CD4-positive, alpha-beta T cell (primary cell): ENCODE measurements at regions of chr1 and their contacts with region 1.

Region 1: DNA sequence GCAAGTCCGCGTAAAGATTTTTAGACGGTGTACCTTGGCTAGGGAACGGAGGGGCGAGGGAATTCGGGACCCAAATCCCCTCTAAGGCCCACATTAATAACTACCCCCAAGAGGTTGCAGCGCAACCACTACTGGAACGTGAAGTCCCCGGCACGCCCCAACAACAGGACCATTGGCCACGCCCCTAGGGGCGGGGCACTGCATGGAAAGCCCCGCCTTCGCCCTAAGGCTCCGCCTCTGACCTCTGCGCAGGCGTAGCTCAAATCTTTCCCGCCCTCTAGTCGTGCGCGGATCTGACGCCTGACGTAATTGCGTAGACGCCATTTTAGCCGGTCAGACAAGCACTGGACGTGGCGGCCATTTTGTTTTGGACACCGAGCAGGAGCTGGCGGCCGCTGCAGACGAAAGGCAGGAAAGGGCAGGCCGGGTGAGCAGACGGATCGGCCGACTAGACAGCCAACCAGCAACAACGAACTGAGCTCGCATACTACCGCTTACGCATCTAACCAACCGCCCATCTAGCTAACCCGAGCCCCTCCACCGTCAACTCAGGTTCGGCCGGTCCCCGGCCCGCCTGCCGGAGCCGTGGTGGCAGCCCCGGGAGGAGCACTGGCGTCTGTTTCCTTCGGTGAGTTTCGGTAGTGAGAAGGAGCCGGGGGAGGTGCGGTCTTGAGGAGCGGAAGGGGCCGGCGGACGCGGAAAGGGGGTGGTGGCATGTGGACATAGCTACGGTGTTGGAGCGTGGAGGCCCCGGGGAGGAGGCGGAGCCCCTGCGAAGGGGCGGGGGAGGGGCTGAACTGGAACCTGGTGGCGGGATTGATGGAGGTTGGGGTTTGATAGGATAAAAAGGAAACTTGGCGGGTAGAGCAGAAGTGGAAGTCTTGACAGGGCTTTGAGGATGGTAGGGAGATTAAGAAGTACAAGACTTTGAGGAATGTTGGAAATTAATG is at the start of gene CHTOP:
- DNase-seq: peak; percentile 90 to 98 (median 95)
- ATAC-seq: peak; percentile 87
- H3K4me3 ChIP-seq: peak within 1 kb of the TSS; percentile 83
- H3K4me3 Mint-ChIP-seq: peak within 1 kb of the TSS; percentile 100
- H3K27ac ChIP-seq: peak within 1 kb of the TSS; percentile 98 to 100
- H3K27ac Mint-ChIP-seq: peak within 1 kb of the TSS; percentile 100
- H3K4me1 ChIP-seq: peaks cover 33% of the 10 kb centered on the region
- H3K4me1 Mint-ChIP-seq: peaks cover 47% of the 10 kb centered on the region
- H3K27me3 ChIP-seq: no peaks in the 10 kb centered on the region
- H3K27me3 Mint-ChIP-seq: no peaks in the 10 kb centered on the region
- CTCF ChIP-seq: no peak
- total RNA-seq, gene CHTOP: 97.1 to 102 TPM

Region 2: DNA sequence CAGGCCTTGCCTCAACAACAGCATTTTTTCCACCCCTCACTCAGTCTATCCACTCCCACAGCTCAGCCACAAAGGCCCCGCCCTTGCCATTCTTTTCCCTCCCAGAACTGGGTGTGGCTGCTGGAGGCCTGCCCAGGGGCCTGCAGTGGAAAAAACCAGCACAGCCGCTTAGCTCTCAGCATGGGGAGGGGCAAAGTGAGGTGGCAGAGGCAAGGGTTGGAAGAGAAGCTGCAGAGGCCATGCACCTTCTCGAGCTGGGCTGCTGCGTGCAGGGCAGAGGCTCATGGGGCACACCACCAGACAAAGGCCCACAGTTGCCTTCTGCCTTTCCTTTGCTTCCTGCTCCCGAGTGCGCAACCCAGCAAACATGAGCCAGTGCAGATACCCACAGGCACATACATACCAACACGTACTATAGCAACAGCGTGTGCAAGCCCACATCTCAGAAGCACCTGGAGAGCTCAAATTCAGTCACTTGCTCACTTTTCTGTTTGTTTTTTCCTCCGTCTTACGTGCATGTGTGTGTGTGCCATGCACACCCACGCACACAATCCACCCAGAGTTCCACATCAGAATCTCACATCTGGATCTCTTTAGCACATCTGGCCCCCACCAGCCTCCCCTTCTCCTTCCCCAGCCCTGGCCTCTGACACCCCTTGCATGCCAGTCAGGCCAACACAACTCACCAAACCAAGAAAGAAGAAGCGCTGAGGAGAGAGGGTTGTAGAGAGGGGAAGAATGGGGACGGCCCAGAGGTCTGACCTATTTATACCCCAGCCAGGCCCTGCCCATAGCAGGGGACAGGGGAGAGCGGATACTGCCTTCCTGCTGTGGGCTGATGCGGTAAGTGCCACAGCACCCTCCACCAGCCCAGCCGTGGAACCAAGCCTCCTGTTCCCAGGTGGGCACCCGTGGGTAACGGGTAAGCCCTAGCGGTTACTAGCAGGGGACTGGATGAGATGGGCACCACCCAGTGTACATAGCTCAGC is 88.6 kb before region 1 on chr1 and contains the start of gene S100A4:
- CTCF ChIA-PET with region 1: no interaction called
- POLR2A ChIA-PET with region 1: interaction called, 40 read pairs
- intact Hi-C with region 1: loop called in 1 of 2 experiments (anchors 5 kb)
- DNase-seq: peak; percentile 65 to 95 (median 88)
- ATAC-seq: peak; percentile 81
- H3K4me3 ChIP-seq: peak within 1 kb of the TSS; percentile 82
- H3K4me3 Mint-ChIP-seq: peak within 1 kb of the TSS; percentile 88
- H3K27ac ChIP-seq: peak within 1 kb of the TSS; percentile 83 to 85
- H3K27ac Mint-ChIP-seq: peak within 1 kb of the TSS; percentile 98
- H3K4me1 ChIP-seq: peaks cover 83% of the 10 kb centered on the region
- H3K4me1 Mint-ChIP-seq: peaks cover 72% of the 10 kb centered on the region
- H3K27me3 ChIP-seq: no peaks in the 10 kb centered on the region
- H3K27me3 Mint-ChIP-seq: no peaks in the 10 kb centered on the region
- CTCF ChIP-seq: no peak
- total RNA-seq, gene S100A4: 297 to 299 TPM

Region 3: DNA sequence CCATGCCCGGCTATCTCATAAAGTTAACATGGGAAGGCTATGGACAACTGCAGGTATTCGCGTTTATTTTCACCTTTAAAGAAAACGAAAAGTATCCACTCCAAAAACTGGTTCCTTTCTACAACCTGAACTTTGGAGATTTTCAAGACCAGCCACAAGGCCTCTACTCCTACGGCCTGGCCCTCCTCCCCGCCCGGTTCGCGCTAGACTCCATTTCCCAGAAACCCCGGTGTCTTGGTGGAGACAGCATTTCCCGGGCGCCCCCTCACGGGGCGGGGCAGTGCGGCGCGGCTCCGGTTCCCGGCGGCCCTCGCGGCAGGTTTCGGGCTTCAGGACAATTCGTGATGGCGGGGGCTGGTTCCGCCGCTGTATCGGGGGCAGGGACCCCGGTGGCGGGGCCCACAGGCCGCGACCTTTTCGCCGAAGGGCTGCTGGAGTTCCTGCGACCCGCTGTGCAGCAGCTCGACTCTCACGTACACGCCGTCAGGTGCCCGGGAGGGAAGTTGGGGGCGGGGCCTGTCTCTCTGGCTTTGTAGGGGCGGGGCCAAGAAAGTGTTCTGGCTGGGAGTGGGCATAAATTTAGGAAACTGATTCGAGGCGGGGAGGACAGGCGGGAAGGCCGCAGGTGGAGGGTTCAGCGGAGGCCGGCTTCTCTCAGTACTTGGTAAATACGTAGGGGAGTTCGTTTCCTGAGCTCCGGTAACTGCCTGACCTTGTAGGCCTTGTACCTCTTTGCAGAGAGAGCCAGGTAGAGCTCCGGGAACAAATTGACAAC is 24.6 kb after region 1 on chr1 and contains the start of gene SNAPIN:
- CTCF ChIA-PET with region 1: interaction called, 3 read pairs
- POLR2A ChIA-PET with region 1: interaction called, 61 read pairs
- intact Hi-C with region 1: loop called (anchors 1 kb)
- DNase-seq: peak; percentile 78 to 93 (median 87)
- ATAC-seq: peak; percentile 96
- H3K4me3 ChIP-seq: peak within 1 kb of the TSS; percentile 79
- H3K4me3 Mint-ChIP-seq: peak within 1 kb of the TSS; percentile 97
- H3K27ac ChIP-seq: peak within 1 kb of the TSS; percentile 76 to 84
- H3K27ac Mint-ChIP-seq: peak within 1 kb of the TSS; percentile 94
- H3K4me1 ChIP-seq: peaks cover 22% of the 10 kb centered on the region
- H3K4me1 Mint-ChIP-seq: peaks cover 16% of the 10 kb centered on the region
- H3K27me3 ChIP-seq: no peaks in the 10 kb centered on the region
- H3K27me3 Mint-ChIP-seq: no peaks in the 10 kb centered on the region
- CTCF ChIP-seq: no peak
- total RNA-seq, gene SNAPIN: 7.2 to 7.3 TPM

Region 4: GRCh38 chr1:153677718-153678505 is 43.9 kb after region 1 on chr1:
- CTCF ChIA-PET with region 1: no interaction called
- POLR2A ChIA-PET with region 1: interaction called, 12 read pairs
- intact Hi-C with region 1: no loop called
- DNase-seq: peak in 13 of 14 experiments; percentile 22 to 74 (median 38)
- ATAC-seq: peak; percentile 51
- H3K4me3 ChIP-seq: peak overlapping the region; percentile 36
- H3K4me3 Mint-ChIP-seq: peak overlapping the region; percentile 71
- H3K27ac ChIP-seq: no peak overlapping the region
- H3K27ac Mint-ChIP-seq: no peak overlapping the region
- H3K4me1 ChIP-seq: peaks cover 25% of the 10 kb centered on the region
- H3K4me1 Mint-ChIP-seq: peaks cover 20% of the 10 kb centered on the region
- H3K27me3 ChIP-seq: peaks cover 30 to 35% of the 10 kb centered on the region in 2 experiments
- H3K27me3 Mint-ChIP-seq: peaks cover 57% of the 10 kb centered on the region
- CTCF ChIP-seq: peak; percentile 73

Region 5: DNA sequence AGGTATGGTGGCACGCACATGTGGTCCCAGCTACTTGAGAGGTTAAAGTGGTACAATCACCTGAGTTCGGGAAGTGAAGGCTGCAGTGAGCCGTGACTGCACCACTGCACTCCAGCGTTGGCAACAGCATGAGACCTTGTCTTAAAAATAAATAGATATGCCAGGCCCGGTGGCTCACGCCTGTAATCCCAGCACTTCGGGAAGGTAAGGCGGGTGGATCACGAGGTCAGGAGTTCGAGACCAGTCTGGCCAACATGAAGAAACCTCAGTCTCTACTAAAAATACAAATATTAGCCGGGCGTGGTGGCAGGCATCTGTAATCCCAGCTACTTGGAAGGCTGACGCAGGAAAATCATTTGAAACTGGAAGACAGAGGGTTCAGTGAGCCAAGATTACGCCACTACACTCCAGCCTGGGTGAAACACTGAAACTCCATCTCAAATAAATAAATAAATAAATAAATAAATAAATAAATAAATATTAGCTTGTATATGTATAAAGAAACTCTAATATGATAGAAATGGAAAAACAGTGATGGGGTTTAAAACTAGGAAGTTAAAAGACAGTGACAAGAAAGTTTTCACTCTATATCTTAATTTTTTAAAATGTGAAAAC is 270.0 kb after region 1 on chr1:
- CTCF ChIA-PET with region 1: no interaction called
- POLR2A ChIA-PET with region 1: no interaction called
- intact Hi-C with region 1: no loop called
- DNase-seq: no peak
- ATAC-seq: no peak
- H3K4me3 ChIP-seq: no peak overlapping the region
- H3K4me3 Mint-ChIP-seq: no peak overlapping the region
- H3K27ac ChIP-seq: no peak overlapping the region
- H3K27ac Mint-ChIP-seq: peak overlapping the region; percentile 56
- H3K4me1 ChIP-seq: peaks cover 16% of the 10 kb centered on the region
- H3K4me1 Mint-ChIP-seq: peaks cover 26% of the 10 kb centered on the region
- H3K27me3 ChIP-seq: no peaks in the 10 kb centered on the region
- H3K27me3 Mint-ChIP-seq: no peaks in the 10 kb centered on the region
- CTCF ChIP-seq: no peak

Region 6: GRCh38 chr1:153916297-153916696 is 282.3 kb after region 1 on chr1:
- CTCF ChIA-PET with region 1: no interaction called
- POLR2A ChIA-PET with region 1: no interaction called
- intact Hi-C with region 1: no loop called
- DNase-seq: no peak
- ATAC-seq: no peak
- H3K4me3 ChIP-seq: no peak overlapping the region
- H3K4me3 Mint-ChIP-seq: no peak overlapping the region
- H3K27ac ChIP-seq: no peak overlapping the region
- H3K27ac Mint-ChIP-seq: no peak overlapping the region
- H3K4me1 ChIP-seq: peaks cover 60% of the 10 kb centered on the region
- H3K4me1 Mint-ChIP-seq: peaks cover 72% of the 10 kb centered on the region
- H3K27me3 ChIP-seq: no peaks in the 10 kb centered on the region
- H3K27me3 Mint-ChIP-seq: no peaks in the 10 kb centered on the region
- CTCF ChIP-seq: no peak

Region 7: DNA sequence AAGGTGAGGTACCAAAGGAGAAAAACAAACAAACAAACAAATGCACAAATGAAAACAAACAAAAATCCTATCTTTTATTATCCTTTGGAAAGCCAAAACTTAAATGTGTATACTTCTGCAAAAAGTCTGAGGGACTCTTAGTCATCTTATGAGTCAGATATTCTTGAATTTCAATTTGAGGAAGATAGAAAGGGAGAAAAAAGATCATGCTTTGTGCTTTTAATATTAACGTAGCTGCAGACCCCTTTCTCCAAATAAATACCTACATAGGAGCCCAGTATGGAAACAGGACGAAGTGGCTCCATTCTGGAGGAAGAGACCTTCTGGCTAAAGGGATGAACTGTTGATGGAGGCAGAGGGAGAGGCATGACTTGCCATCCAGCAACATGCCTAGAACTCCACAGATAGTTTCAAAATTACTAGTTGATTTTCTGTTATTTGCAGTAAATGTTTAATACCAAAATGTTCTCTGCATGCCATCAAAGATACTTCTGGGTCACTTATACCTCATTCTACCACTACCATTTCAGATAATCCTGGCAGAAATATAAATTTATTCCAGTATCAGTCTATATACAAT is 495.5 kb after region 1 on chr1:
- CTCF ChIA-PET with region 1: no interaction called
- POLR2A ChIA-PET with region 1: no interaction called
- intact Hi-C with region 1: no loop called
- DNase-seq: no peak
- ATAC-seq: no peak
- H3K4me3 ChIP-seq: no peak overlapping the region
- H3K4me3 Mint-ChIP-seq: no peak overlapping the region
- H3K27ac ChIP-seq: no peak overlapping the region
- H3K27ac Mint-ChIP-seq: no peak overlapping the region
- H3K4me1 ChIP-seq: no peaks in the 10 kb centered on the region
- H3K4me1 Mint-ChIP-seq: no peaks in the 10 kb centered on the region
- H3K27me3 ChIP-seq: no peaks in the 10 kb centered on the region
- H3K27me3 Mint-ChIP-seq: no peaks in the 10 kb centered on the region
- CTCF ChIP-seq: no peak